ENCODE measurements at regions of chr9 and their contacts with region 1.

Region 1: DNA sequence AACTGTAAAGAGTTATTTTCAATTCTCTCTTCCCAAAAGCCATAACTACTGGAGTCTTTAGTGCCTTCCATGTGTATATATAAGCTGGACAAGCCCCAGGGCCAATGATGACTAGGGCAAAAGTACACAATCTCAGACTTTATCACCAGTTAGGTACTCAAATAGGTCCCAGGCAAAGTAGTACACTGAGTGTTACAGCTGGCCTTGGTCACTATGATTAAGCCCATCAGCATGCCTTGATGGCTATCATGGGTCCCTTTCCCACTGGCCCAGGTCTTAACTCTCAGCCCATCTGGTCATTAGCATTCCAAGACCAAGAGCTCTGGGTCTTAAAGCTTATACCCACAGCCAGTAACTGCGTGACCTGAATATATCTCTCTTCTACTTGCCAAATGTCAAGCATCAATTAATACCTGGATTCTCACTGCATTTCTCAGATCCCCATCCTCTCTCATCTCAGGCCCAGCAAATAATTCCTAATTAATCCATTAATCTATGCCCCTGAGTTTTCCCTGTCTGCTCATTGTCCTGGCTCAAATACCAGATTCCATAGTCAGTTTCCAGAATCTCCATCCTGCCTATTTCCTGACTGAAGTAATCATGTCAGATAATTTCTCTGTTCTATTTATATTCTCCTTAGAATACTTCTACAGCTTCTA is 62.3 kb downstream of the NR6A1 start:
- DNase-seq: no peak
- H3K4me3 ChIP-seq: no peak overlapping the region
- H3K27ac ChIP-seq: no peak overlapping the region
- H3K4me1 ChIP-seq: peaks cover 9% of the 10 kb centered on the region
- H3K27me3 ChIP-seq: no peaks in the 10 kb centered on the region
- CTCF ChIP-seq: no peak

Region 2: GRCh38 chr9:124415102-124415851 is 293.5 kb before region 1 on chr9 and contains the start of gene PSMB7:
- CTCF ChIA-PET with region 1: no interaction called
- POLR2A ChIA-PET with region 1: no interaction called
- intact Hi-C with region 1: loop called (anchors 5 kb)
- DNase-seq: peak; percentile 98
- H3K4me3 ChIP-seq: peak within 1 kb of the TSS; percentile 74
- H3K27ac ChIP-seq: peak within 1 kb of the TSS; percentile 80
- H3K4me1 ChIP-seq: peaks cover 20% of the 10 kb centered on the region
- H3K27me3 ChIP-seq: no peaks in the 10 kb centered on the region
- CTCF ChIP-seq: peak; percentile 85
- total RNA-seq, gene PSMB7: 355 and 380 TPM in 2 replicates

Region 3: DNA sequence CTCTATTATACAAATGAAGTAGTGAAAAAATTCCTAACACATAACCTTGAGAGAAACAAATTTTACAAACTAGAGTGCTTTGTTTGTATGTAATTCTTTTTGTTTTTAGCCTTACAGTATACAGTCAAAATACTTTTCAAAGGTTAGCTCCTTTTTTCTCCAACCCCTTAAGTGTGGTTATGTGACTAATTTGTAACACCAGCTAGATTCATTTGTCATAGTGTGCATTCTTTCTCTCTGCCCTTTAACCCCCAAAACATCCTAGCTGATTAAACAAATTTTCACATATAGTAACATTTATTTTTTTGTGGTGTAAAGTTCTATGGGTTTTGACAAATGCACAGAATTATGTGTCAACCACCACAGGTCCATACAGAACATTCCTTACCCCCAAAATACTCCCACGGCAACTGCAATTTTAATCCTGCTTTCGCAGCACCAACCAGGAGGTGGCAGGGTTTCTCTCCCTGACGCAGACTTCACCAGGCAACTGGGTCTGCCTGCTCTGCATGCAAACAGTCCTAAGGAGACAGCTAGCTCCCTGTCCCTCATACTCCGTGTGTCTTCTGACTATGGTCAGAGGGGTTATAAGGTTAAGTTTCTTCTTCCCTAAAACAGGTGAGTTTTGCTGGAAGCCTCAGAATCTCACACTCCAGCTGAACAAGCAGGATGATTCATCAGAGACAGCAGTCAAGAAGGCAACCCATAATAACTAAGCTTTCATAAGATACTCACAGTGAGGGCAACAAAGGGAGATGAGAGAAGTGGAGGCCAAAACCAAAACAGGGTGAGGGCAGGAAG is 157.1 kb before region 1 on chr9:
- CTCF ChIA-PET with region 1: interaction called, 10 read pairs
- POLR2A ChIA-PET with region 1: no interaction called
- intact Hi-C with region 1: loop called (anchors 1 kb)
- DNase-seq: peak; percentile 73
- H3K4me3 ChIP-seq: no peak overlapping the region
- H3K27ac ChIP-seq: no peak overlapping the region
- H3K4me1 ChIP-seq: peaks cover 3% of the 10 kb centered on the region
- H3K27me3 ChIP-seq: no peaks in the 10 kb centered on the region
- CTCF ChIP-seq: peak; percentile 88

Region 4: GRCh38 chr9:124617471-124618141 is 91.2 kb before region 1 on chr9:
- CTCF ChIA-PET with region 1: interaction called, 21 read pairs
- POLR2A ChIA-PET with region 1: no interaction called
- intact Hi-C with region 1: loop called (anchors 1 kb)
- DNase-seq: peak; percentile 87
- H3K4me3 ChIP-seq: no peak overlapping the region
- H3K27ac ChIP-seq: no peak overlapping the region
- H3K4me1 ChIP-seq: peaks cover 18% of the 10 kb centered on the region
- H3K27me3 ChIP-seq: no peaks in the 10 kb centered on the region
- CTCF ChIP-seq: peak; percentile 96

Region 5: DNA sequence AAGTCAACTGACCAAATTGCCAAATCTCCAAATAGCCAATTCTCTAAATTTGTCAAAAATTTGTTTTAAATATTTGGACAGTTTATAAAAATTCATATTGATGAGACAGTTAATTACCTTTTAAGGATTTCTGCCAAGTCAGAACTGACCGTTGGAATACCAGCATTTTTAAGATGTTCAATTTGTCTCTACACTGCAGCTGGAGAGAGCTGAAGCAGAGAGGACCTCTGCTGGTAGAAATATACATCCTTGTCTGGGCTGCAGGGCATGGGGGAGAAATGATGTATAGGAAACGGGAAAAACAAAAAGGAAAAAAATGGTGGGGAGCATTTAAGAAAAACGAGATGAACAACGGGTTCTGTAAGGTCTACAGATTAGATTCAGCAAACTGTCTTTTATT is 45.5 kb after region 1 on chr9:
- CTCF ChIA-PET with region 1: interaction called, 4 read pairs
- POLR2A ChIA-PET with region 1: no interaction called
- intact Hi-C with region 1: loop called (anchors 1 kb)
- DNase-seq: peak; percentile 66
- H3K4me3 ChIP-seq: no peak overlapping the region
- H3K27ac ChIP-seq: no peak overlapping the region
- H3K4me1 ChIP-seq: peaks cover 56% of the 10 kb centered on the region
- H3K27me3 ChIP-seq: no peaks in the 10 kb centered on the region
- CTCF ChIP-seq: peak; percentile 84

Region 6: GRCh38 chr9:125433461-125434011 is 724.8 kb after region 1 on chr9:
- CTCF ChIA-PET with region 1: no interaction called
- POLR2A ChIA-PET with region 1: no interaction called
- intact Hi-C with region 1: no loop called
- DNase-seq: peak; percentile 67
- H3K4me3 ChIP-seq: no peak overlapping the region
- H3K27ac ChIP-seq: no peak overlapping the region
- H3K4me1 ChIP-seq: peaks cover 18% of the 10 kb centered on the region
- H3K27me3 ChIP-seq: no peaks in the 10 kb centered on the region
- CTCF ChIP-seq: no peak

Region 7: GRCh38 chr9:125529589-125530515 is 821.1 kb after region 1 on chr9:
- CTCF ChIA-PET with region 1: no interaction called
- POLR2A ChIA-PET with region 1: no interaction called
- intact Hi-C with region 1: no loop called
- DNase-seq: no peak
- H3K4me3 ChIP-seq: no peak overlapping the region
- H3K27ac ChIP-seq: no peak overlapping the region
- H3K4me1 ChIP-seq: peaks cover 32% of the 10 kb centered on the region
- H3K27me3 ChIP-seq: no peaks in the 10 kb centered on the region
- CTCF ChIP-seq: no peak